PC-3 (cell line): ENCODE measurements at regions of chr4 and their contacts with region 1.

Region 1: GRCh38 chr4:67327262-67328017 is 217.9 kb downstream of the CENPC start:
- DNase-seq: peak; percentile 90
- ATAC-seq: peak; percentile 94
- H3K4me3 ChIP-seq: no peak overlapping the region
- H3K27ac ChIP-seq: no peak overlapping the region
- H3K4me1 ChIP-seq: no peaks in the 10 kb centered on the region
- H3K27me3 ChIP-seq: no peaks in the 10 kb centered on the region
- CTCF ChIP-seq: peak; percentile 98

Region 2: DNA sequence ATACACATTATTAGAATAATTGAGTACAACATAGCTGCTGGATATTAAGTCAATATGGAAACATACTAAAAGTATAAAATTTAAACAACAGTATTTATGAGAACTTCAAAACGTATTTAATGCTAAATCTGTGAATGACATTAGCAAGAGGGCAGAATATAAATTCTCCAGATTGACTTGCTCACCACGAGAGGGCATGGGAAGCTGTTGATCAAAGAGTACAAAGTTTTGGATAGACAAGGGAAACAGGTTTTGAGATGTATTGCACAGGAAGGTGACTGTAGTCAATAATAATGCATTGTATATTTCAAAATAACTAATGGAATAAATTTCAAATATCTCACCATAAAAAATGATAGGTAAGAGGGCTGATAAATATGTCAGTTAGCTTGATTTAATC is 550.3 kb before region 1 on chr4:
- CTCF ChIA-PET with region 1: interaction called, 3 read pairs
- POLR2A ChIA-PET with region 1: no interaction called
- intact Hi-C with region 1: loop called (anchors 10 kb)
- DNase-seq: peak; percentile 49
- ATAC-seq: peak; percentile 46; the same call in 1 of the 2 replicates
- H3K4me3 ChIP-seq: no peak overlapping the region
- H3K27ac ChIP-seq: no peak overlapping the region
- H3K4me1 ChIP-seq: no peaks in the 10 kb centered on the region
- H3K27me3 ChIP-seq: no peaks in the 10 kb centered on the region
- CTCF ChIP-seq: peak; percentile 62

Region 3: DNA sequence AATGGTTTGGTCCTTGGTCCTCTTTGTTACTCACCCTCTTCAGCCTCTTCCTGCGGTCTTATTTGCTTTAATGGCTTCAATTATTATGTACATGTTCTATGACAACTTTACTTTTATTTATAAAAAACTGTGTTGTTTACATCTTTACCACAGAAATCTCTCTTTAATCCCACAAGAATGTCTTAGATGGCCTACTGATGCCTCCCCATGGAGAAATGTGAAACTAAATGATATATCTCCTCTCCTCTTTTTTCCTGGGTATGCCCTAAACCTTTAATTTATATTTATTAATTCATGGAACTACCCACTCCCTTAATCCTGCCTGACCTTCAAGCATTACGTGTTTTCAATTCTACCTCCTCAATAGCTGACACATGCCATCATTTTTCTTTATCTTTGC is 355.4 kb before region 1 on chr4:
- CTCF ChIA-PET with region 1: interaction called, 4 read pairs
- POLR2A ChIA-PET with region 1: no interaction called
- intact Hi-C with region 1: loop called (anchors 10 kb)
- DNase-seq: peak; percentile 48
- ATAC-seq: peak; percentile 46; the same call in 1 of the 2 replicates
- H3K4me3 ChIP-seq: no peak overlapping the region
- H3K27ac ChIP-seq: no peak overlapping the region
- H3K4me1 ChIP-seq: peaks cover 13% of the 10 kb centered on the region; the same call in 1 of the 2 replicates
- H3K27me3 ChIP-seq: no peaks in the 10 kb centered on the region
- CTCF ChIP-seq: peak; percentile 44

Region 4: GRCh38 chr4:67087897-67088296 is 239.5 kb before region 1 on chr4:
- CTCF ChIA-PET with region 1: no interaction called
- POLR2A ChIA-PET with region 1: no interaction called
- intact Hi-C with region 1: loop called (anchors 1 kb)
- DNase-seq: peak; percentile 74
- ATAC-seq: peak; percentile 43; the same call in 1 of the 2 replicates
- H3K4me3 ChIP-seq: no peak overlapping the region
- H3K27ac ChIP-seq: no peak overlapping the region
- H3K4me1 ChIP-seq: 0 out of 2 replicates have a peak, but pooled peaks cover 9% of the 10 kb centered on the region
- H3K27me3 ChIP-seq: no peaks in the 10 kb centered on the region
- CTCF ChIP-seq: peak; percentile 88

Region 5: GRCh38 chr4:67122029-67122428 is 205.4 kb before region 1 on chr4:
- CTCF ChIA-PET with region 1: interaction called, 3 read pairs
- POLR2A ChIA-PET with region 1: no interaction called
- intact Hi-C with region 1: loop called (anchors 1 kb)
- DNase-seq: peak; percentile 66
- ATAC-seq: peak; percentile 93
- H3K4me3 ChIP-seq: no peak overlapping the region
- H3K27ac ChIP-seq: no peak overlapping the region
- H3K4me1 ChIP-seq: no peaks in the 10 kb centered on the region
- H3K27me3 ChIP-seq: no peaks in the 10 kb centered on the region
- CTCF ChIP-seq: peak; percentile 81

Region 6: DNA sequence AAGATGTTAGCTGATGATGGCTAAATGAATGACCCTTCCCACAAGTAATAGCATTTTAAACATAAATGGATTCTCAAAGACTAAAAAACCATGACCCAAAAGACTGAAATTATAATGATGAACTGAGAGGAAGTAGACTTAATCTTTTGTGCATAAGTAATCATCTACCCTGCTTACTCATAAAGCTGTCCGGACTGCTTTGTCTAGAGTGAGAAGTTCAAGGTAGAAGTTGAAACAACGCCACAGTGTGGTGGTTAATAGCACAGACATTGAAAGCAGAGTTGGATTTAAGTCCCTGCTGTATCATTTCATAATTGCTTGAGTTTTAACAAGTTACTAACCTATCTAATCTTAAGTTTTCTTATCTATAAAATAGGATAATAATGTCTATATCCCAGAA is 128.7 kb before region 1 on chr4:
- CTCF ChIA-PET with region 1: no interaction called
- POLR2A ChIA-PET with region 1: no interaction called
- intact Hi-C with region 1: loop called (anchors 5 kb)
- DNase-seq: peak; percentile 77
- ATAC-seq: peak; percentile 93
- H3K4me3 ChIP-seq: no peak overlapping the region
- H3K27ac ChIP-seq: no peak overlapping the region
- H3K4me1 ChIP-seq: no peaks in the 10 kb centered on the region
- H3K27me3 ChIP-seq: no peaks in the 10 kb centered on the region
- CTCF ChIP-seq: peak; percentile 79

Region 7: DNA sequence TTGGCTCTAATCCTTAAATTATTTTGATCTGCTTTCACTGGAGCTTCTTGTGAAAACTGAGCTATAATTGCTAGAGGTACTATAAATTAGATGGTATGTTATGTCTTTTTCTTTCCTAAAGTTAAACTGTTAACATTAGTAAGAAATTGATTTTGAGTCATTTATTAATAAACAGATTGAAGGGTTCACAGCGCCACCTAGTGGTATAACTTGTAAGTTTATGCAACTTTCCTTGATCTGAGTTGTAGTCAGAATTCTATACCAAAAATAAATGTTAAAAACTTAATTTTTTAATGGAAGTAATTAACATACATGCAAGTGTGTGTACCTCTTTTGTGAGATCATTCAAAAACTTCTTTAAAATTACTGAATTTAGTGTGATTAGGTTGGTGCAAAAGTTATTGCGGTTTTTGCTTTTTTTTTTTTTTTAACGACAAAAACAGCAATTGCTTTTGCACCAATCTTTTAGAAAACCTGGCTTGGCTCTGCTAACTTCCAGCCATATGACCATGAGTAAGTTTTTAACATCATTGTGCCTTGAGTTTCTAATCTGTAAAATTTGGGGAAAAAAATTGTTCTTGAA is 66.3 kb after region 1 on chr4:
- CTCF ChIA-PET with region 1: no interaction called
- POLR2A ChIA-PET with region 1: no interaction called
- intact Hi-C with region 1: loop called (anchors 5 kb)
- DNase-seq: peak; percentile 78
- ATAC-seq: no peak
- H3K4me3 ChIP-seq: no peak overlapping the region
- H3K27ac ChIP-seq: no peak overlapping the region
- H3K4me1 ChIP-seq: no peaks in the 10 kb centered on the region
- H3K27me3 ChIP-seq: peaks cover 28% of the 10 kb centered on the region
- CTCF ChIP-seq: peak; percentile 96